GM12878 (cell line): ENCODE measurements at regions of chr4 and their contacts with region 1.

Region 1: GRCh38 chr4:109559983-109560686 is at the start of gene MCUB:
- DNase-seq: peak; percentile 49
- ATAC-seq: peak; percentile 95
- H3K4me3 ChIP-seq: peak within 1 kb of the TSS; percentile 85
- H3K27ac ChIP-seq: peak within 1 kb of the TSS; percentile 87
- H3K4me1 ChIP-seq: peaks cover 3% of the 10 kb centered on the region; the same call in 1 of the 2 replicates
- H3K27me3 ChIP-seq: no peaks in the 10 kb centered on the region
- CTCF ChIP-seq: no peak
- EP300 ChIP-seq: no peak
- POLR2A ChIP-seq: peak; percentile 87
- RAD21 ChIP-seq: peak; percentile 26; the same call in 1 of the 2 replicates
- polyA plus RNA-seq, gene MCUB: 4.7 to 10.7 TPM

Region 2: DNA sequence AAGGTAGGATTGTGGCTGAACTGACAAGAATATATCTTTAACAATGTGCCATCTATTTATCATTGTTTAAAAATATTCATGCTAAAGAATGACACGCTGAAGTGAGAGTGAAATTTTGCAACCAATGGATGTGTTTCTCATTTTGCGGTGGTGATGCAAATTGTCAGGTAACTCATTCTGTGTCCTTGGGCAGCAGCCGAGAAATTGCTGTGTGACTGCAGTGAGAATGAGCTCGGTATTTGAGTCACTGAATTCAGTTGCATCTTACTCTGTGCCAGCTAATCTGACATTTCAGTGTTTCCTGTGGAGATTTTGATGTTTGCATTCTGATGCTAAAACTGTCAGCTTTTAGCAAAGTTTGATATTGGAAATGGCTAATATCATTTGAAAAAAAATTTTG is 28.0 kb after region 1 on chr4:
- CTCF ChIA-PET with region 1: no interaction called
- POLR2A ChIA-PET with region 1: no interaction called
- RAD21 ChIA-PET with region 1: interaction called, 5 read pairs
- SMC1A ChIA-PET with region 1: interaction called, 15 read pairs
- in situ Hi-C with region 1: no loop called
- intact Hi-C with region 1: loop called (anchors 2 kb)
- DNase-seq: peak; percentile 58
- ATAC-seq: peak; percentile 100
- H3K4me3 ChIP-seq: peak overlapping the region; percentile 3; the same call in 1 of the 2 replicates
- H3K27ac ChIP-seq: no peak overlapping the region
- H3K4me1 ChIP-seq: peaks cover 9% of the 10 kb centered on the region; the same call in 1 of the 2 replicates
- H3K27me3 ChIP-seq: no peaks in the 10 kb centered on the region
- CTCF ChIP-seq: no peak
- EP300 ChIP-seq: no peak
- POLR2A ChIP-seq: no peak
- RAD21 ChIP-seq: no peak

Region 3: DNA sequence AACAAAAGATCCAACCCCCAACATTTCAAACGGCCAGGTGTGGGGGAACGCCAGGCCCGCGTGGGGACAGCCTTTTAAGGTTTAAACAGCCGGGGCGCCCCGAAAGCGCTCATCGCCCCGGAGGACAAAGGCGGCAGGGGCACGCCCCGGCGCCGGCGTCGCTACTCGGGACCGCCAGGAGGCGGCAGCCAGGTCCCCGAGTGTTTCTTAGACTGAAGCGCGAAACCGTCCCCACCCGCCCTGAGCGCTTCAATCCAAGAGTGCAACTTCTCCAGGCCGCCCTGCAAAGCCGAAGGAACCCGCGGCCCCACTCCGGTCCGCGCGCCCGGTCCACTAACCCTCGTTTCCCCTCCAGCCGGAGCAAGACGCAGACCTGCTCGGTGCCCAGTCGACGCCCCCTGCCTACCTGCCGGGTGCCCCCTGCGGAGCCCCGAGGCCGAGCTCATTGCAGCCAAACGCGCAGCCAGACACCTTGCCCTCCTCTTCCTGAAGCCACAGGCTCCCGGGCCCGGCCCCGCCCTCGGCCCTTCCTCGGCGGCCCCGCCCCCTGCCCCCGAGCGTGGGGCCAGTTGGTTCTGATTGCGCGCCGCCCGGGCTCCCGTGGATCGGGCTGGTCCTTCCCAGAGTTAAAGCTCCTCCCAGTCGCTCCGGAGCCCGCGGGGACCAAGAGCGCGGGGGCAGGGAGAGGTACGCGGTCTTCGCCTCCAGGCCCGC is 143.0 kb after region 1 on chr4 and contains the start of gene CASP6:
- CTCF ChIA-PET with region 1: interaction called, 3 read pairs
- POLR2A ChIA-PET with region 1: interaction called, 9 read pairs
- RAD21 ChIA-PET with region 1: interaction called, 5 read pairs
- SMC1A ChIA-PET with region 1: interaction called, 7 read pairs
- in situ Hi-C with region 1: no loop called
- intact Hi-C with region 1: loop called (anchors 2 kb)
- DNase-seq: peak; percentile 41
- ATAC-seq: peak; percentile 90
- H3K4me3 ChIP-seq: peak within 1 kb of the TSS; percentile 96
- H3K27ac ChIP-seq: peak within 1 kb of the TSS; percentile 71
- H3K4me1 ChIP-seq: peaks cover 15% of the 10 kb centered on the region
- H3K27me3 ChIP-seq: no peaks in the 10 kb centered on the region
- CTCF ChIP-seq: peak; percentile 59 to 79 (median 70)
- EP300 ChIP-seq: 0 out of 4 replicates have a peak, but pooled peaks have one; percentile 6 to 15
- POLR2A ChIP-seq: peak; percentile 73
- RAD21 ChIP-seq: peak; percentile 57
- polyA plus RNA-seq, gene CASP6: 20.0 to 23.2 TPM

Region 4: GRCh38 chr4:109977854-109978501 is 417.8 kb after region 1 on chr4:
- CTCF ChIA-PET with region 1: no interaction called
- POLR2A ChIA-PET with region 1: no interaction called
- RAD21 ChIA-PET with region 1: no interaction called
- SMC1A ChIA-PET with region 1: no interaction called
- in situ Hi-C with region 1: no loop called
- intact Hi-C with region 1: loop called (anchors 5 kb)
- DNase-seq: no peak
- ATAC-seq: peak; percentile 64
- H3K4me3 ChIP-seq: no peak overlapping the region
- H3K27ac ChIP-seq: no peak overlapping the region
- H3K4me1 ChIP-seq: no peaks in the 10 kb centered on the region
- H3K27me3 ChIP-seq: peaks cover 0 to 2% of the 10 kb centered on the region in 2 experiments; a peak in 3 of 4 replicates
- CTCF ChIP-seq: peak; percentile 20 to 48 (median 28); a peak in 4 of 6 replicates
- EP300 ChIP-seq: no peak
- POLR2A ChIP-seq: no peak
- RAD21 ChIP-seq: peak; percentile 58